Right cardiac atrium (tissue), 5 donors: ENCODE measurements at regions of chr1 and their contacts with region 1.

Region 1: GRCh38 chr1:212053993-212054392 is 18.4 kb downstream of the DTL start:
- DNase-seq: no peak
- ATAC-seq: no peak
- H3K4me3 ChIP-seq: no peak overlapping the region
- H3K27ac ChIP-seq: no peak overlapping the region
- H3K4me1 ChIP-seq: no peaks in the 10 kb centered on the region
- H3K27me3 ChIP-seq: no peaks in the 10 kb centered on the region

Region 2: GRCh38 chr1:211551628-211552460 is 502.1 kb before region 1 on chr1:
- intact Hi-C with region 1: no loop called
- DNase-seq: no peak
- ATAC-seq: no peak
- H3K4me3 ChIP-seq: no peak overlapping the region
- H3K27ac ChIP-seq: no peak overlapping the region
- H3K4me1 ChIP-seq: peaks cover 9% of the 10 kb centered on the region
- H3K27me3 ChIP-seq: no peaks in the 10 kb centered on the region

Region 3: GRCh38 chr1:211975152-211975941 is 78.6 kb before region 1 on chr1:
- intact Hi-C with region 1: no loop called
- DNase-seq: no peak
- ATAC-seq: peak in 1 of 2 donors; percentile 55
- H3K4me3 ChIP-seq: no peak overlapping the region
- H3K27ac ChIP-seq: no peak overlapping the region
- H3K4me1 ChIP-seq: no peaks in the 10 kb centered on the region
- H3K27me3 ChIP-seq: no peaks in the 10 kb centered on the region

Region 4: DNA sequence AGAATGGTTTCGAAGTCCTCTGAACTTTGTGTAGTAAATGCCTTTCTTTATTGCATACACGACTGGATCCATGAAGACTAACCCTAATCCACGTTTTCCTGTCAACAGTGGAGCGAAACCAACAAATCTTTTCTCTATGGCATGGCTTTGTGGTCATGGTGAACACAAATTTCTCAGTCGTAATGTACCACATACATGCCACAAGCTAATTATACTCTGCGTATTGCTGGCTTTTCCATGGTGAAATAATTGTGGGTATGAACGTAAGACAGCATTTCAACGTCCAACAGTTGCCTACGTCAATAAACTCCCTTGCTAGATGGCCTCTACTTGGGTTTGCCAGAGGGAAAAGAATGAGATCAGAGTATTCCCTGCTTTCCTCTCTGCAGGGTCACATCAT is 46.1 kb before region 1 on chr1:
- intact Hi-C with region 1: loop called in 1 of 4 experiments (anchors 5 kb)
- DNase-seq: no peak
- ATAC-seq: no peak
- H3K4me3 ChIP-seq: no peak overlapping the region
- H3K27ac ChIP-seq: no peak overlapping the region
- H3K4me1 ChIP-seq: no peaks in the 10 kb centered on the region
- H3K27me3 ChIP-seq: no peaks in the 10 kb centered on the region

Region 5: GRCh38 chr1:212353181-212353580 is 299.2 kb after region 1 on chr1:
- intact Hi-C with region 1: no loop called
- DNase-seq: no peak
- ATAC-seq: no peak
- H3K4me3 ChIP-seq: no peak overlapping the region
- H3K27ac ChIP-seq: no peak overlapping the region
- H3K4me1 ChIP-seq: no peaks in the 10 kb centered on the region
- H3K27me3 ChIP-seq: no peaks in the 10 kb centered on the region